ENCODE measurements at regions of chr16 and their contacts with region 1.

Region 1: DNA sequence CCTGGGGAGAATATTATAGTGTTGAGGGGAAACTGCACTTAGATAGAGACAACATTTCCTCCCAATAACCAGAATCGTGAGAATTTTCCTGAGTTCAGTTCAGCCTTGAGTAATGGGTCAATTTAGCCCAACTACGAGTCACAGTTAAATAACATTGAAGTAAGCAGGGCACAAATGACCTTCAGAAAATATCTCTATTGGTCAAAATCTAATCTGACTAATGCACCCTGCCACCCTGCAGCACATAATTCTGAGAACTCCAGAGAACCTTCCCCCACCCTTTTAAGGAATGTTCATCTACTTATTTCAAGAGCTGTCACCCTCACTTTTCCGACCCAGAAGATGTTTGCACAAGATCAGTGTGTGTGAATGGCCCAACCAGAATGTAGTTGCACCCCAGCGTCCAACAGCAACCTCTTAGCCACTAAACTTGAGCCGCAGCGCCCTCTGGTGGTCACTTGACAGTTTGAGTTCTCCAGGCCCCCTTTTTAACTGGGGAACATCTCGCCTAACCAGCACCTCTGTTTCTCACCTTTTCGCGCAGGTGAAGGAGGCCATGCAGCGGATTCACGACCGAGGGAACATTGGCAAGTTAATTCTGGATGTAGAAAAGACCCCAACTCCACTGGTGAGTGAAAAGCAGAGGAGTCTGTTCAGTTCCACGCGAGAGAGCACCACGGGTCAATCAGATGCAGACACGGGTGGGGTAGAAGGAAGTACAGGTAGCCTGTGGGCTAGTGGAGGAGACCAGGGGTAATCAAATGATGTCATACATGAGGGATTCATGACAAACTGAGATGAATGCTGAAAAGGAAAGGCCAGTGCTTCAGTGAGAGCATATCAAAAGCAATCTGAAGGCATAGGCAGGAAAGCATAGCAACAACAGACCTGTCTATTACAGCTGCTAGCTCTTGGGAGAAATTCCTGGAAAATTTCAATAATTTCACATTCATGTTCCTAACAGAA is 50.8 kb upstream of the CLEC3A start:
- DNase-seq: peak; percentile 75
- ATAC-seq: peak; percentile 96
- H3K4me3 ChIP-seq: no peak overlapping the region
- H3K27ac ChIP-seq: no peak overlapping the region
- H3K4me1 ChIP-seq: no peaks in the 10 kb centered on the region
- H3K27me3 ChIP-seq: no peaks in the 10 kb centered on the region
- CTCF ChIP-seq: peak; percentile 81
- POLR2A ChIP-seq: peak; percentile 42; the same call in 1 of the 2 replicates
- RAD21 ChIP-seq: peak; percentile 94

Region 2: DNA sequence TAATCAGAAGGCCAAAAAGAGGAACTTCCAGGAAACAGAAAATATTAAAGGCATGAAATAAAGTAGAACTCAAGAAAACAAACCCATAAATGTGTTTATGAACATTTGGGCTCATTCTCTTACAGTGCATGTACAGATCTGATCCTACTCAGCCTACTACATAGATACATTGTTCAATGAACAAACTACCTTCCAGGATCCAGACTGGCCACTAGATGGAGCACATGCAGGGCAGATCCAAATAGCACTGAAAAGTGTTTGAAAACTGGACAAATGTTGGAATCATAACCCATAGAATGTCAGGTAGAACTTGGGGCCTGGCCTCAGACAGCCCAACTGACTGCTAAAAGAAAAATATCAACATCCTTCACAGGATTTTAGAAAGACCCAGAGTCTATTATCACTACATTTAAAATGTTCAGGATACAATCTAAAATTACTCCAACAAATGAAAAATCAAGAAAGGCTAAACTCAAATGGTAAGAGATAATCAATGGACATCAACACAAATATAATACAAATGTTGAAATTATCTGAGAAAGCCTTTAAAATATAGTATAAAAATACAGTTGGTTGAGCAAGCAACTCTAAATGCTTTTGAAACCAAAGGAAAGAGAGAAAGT is 371.7 kb before region 1 on chr16:
- CTCF ChIA-PET with region 1: no interaction called
- POLR2A ChIA-PET with region 1: no interaction called
- dilution Hi-C with region 1: no loop called
- in situ Hi-C with region 1: no loop called
- intact Hi-C with region 1: loop called (anchors 1 kb)
- DNase-seq: peak; percentile 47
- ATAC-seq: peak; percentile 84
- H3K4me3 ChIP-seq: no peak overlapping the region
- H3K27ac ChIP-seq: no peak overlapping the region
- H3K4me1 ChIP-seq: no peaks in the 10 kb centered on the region
- H3K27me3 ChIP-seq: peaks cover 2% of the 10 kb centered on the region; the same call in 1 of the 2 replicates
- CTCF ChIP-seq: peak; percentile 76
- POLR2A ChIP-seq: no peak
- RAD21 ChIP-seq: peak; percentile 73

Region 3: GRCh38 chr16:77722309-77723107 is 249.1 kb before region 1 on chr16 and contains the start of gene NUDT7:
- CTCF ChIA-PET with region 1: interaction called, 3 read pairs
- POLR2A ChIA-PET with region 1: no interaction called
- dilution Hi-C with region 1: no loop called
- in situ Hi-C with region 1: no loop called
- intact Hi-C with region 1: loop called (anchors 1 kb)
- DNase-seq: peak; percentile 96
- ATAC-seq: peak; percentile 98
- H3K4me3 ChIP-seq: peak within 1 kb of the TSS; percentile 72
- H3K27ac ChIP-seq: peak within 1 kb of the TSS; percentile 90
- H3K4me1 ChIP-seq: no peaks in the 10 kb centered on the region
- H3K27me3 ChIP-seq: no peaks in the 10 kb centered on the region
- CTCF ChIP-seq: 0 out of 2 replicates have a peak, but pooled peaks have one; percentile 17
- POLR2A ChIP-seq: 0 out of 2 replicates have a peak, but pooled peaks have one; percentile 26
- RAD21 ChIP-seq: no peak
- total RNA-seq, gene NUDT7: 3.9 and 4.3 TPM in 2 replicates

Region 4: DNA sequence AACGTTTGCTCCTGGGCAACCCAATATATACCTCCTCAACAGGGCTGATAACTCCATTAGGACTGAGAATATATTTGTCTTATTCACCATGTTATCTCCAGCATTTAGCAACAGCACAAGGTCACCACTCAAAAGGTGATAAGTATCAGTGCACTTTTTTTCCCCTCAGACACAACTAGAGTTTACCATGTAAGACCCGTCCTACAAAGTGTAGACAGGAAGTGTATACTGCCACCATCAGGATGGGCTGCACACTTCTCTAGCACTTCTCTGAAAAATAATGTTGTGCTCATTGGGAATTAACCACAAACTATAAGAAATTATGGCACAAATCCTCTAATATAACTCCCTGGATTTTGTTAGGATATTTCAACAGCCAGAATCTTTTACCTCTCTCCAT is 188.9 kb before region 1 on chr16:
- CTCF ChIA-PET with region 1: no interaction called
- POLR2A ChIA-PET with region 1: no interaction called
- dilution Hi-C with region 1: no loop called
- in situ Hi-C with region 1: no loop called
- intact Hi-C with region 1: loop called (anchors 2 kb)
- DNase-seq: peak; percentile 46
- ATAC-seq: no peak
- H3K4me3 ChIP-seq: no peak overlapping the region
- H3K27ac ChIP-seq: no peak overlapping the region
- H3K4me1 ChIP-seq: peaks cover 5% of the 10 kb centered on the region
- H3K27me3 ChIP-seq: no peaks in the 10 kb centered on the region
- CTCF ChIP-seq: peak; percentile 60
- POLR2A ChIP-seq: no peak
- RAD21 ChIP-seq: peak; percentile 49

Region 5: GRCh38 chr16:77788181-77789084 is 183.2 kb before region 1 on chr16 and contains the start of gene VAT1L:
- CTCF ChIA-PET with region 1: no interaction called
- POLR2A ChIA-PET with region 1: interaction called, 12 read pairs
- dilution Hi-C with region 1: no loop called
- in situ Hi-C with region 1: no loop called
- intact Hi-C with region 1: loop called (anchors 2 kb)
- DNase-seq: peak; percentile 63
- ATAC-seq: peak; percentile 93
- H3K4me3 ChIP-seq: peak within 1 kb of the TSS; percentile 93
- H3K27ac ChIP-seq: peak within 1 kb of the TSS; percentile 25; the same call in 1 of the 2 replicates
- H3K4me1 ChIP-seq: peaks cover 9% of the 10 kb centered on the region
- H3K27me3 ChIP-seq: peaks cover 4% of the 10 kb centered on the region; the same call in 1 of the 2 replicates
- CTCF ChIP-seq: no peak
- POLR2A ChIP-seq: no peak
- RAD21 ChIP-seq: no peak
- total RNA-seq, gene VAT1L: 18.1 and 18.5 TPM in 2 replicates

Region 6: GRCh38 chr16:78002915-78003538 is 31.4 kb after region 1 on chr16:
- CTCF ChIA-PET with region 1: interaction called, 13 read pairs
- POLR2A ChIA-PET with region 1: no interaction called
- dilution Hi-C with region 1: no loop called
- in situ Hi-C with region 1: no loop called
- intact Hi-C with region 1: loop called (anchors 2 kb)
- DNase-seq: peak; percentile 90
- ATAC-seq: peak; percentile 98
- H3K4me3 ChIP-seq: no peak overlapping the region
- H3K27ac ChIP-seq: no peak overlapping the region
- H3K4me1 ChIP-seq: no peaks in the 10 kb centered on the region
- H3K27me3 ChIP-seq: peaks cover 4% of the 10 kb centered on the region
- CTCF ChIP-seq: peak; percentile 99
- POLR2A ChIP-seq: no peak
- RAD21 ChIP-seq: peak; percentile 95

Region 7: GRCh38 chr16:78198288-78198687 is 226.7 kb after region 1 on chr16:
- CTCF ChIA-PET with region 1: no interaction called
- POLR2A ChIA-PET with region 1: no interaction called
- dilution Hi-C with region 1: no loop called
- in situ Hi-C with region 1: no loop called
- intact Hi-C with region 1: no loop called
- DNase-seq: no peak
- ATAC-seq: no peak
- H3K4me3 ChIP-seq: no peak overlapping the region
- H3K27ac ChIP-seq: no peak overlapping the region
- H3K4me1 ChIP-seq: no peaks in the 10 kb centered on the region
- H3K27me3 ChIP-seq: peaks cover 2% of the 10 kb centered on the region; the same call in 1 of the 2 replicates
- CTCF ChIP-seq: no peak
- POLR2A ChIP-seq: no peak
- RAD21 ChIP-seq: no peak

Measured in IMR-90 (cell line).